CD4-positive, alpha-beta memory T cell (primary cell): ENCODE measurements at regions of chr20 and their contacts with region 1.

Region 1: DNA sequence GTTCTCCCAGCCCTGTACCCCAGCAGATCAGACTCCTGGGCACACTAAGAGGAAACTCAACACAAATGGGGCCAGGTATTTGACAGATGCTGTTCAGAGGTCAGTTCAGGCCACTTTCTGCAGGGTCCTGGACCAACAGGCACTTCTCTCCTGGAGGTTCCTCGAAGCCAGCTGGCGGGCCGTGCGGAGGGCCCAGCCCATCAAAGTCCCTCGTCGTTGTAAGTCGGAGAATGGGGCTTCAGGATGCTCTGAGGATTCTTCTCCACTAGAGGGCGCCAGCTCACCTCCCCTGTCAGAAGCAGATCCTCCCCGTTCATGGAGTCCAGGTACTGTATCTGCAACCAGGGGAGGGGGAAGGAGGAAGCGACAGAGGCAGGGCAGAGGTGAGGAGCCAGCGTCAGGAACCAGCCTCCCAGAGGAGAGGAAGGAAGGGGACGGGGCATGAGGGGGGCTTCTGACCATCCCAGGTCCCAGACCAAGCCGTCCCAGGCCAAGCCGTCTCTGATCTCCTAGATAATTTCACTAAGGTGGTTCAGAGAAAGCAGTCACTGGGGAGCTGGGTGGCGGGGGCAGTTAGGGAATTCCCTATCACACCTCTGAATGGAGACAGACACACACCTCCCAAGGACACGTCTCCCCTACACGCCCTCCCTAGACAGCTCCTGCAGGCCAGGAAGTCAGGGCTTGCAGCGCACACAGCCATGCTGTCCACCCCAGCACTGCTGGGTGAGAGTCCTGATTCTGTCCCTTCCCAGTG is 11.7 kb upstream of the FAM83C start:
- DNase-seq: peak; percentile 80 to 84 (median 82)
- H3K4me3 ChIP-seq: no peak overlapping the region
- H3K4me3 Mint-ChIP-seq: no peak overlapping the region
- H3K27ac ChIP-seq: no peak overlapping the region
- H3K27ac Mint-ChIP-seq: peak overlapping the region in 5 of 7 donors; percentile 18 to 76 (median 61)
- H3K4me1 ChIP-seq: peaks cover 6% of the 10 kb centered on the region
- H3K4me1 Mint-ChIP-seq: peaks cover 3 to 10% (median 5%) of the 10 kb centered on the region in 4 donors
- H3K27me3 ChIP-seq: no peaks in the 10 kb centered on the region
- H3K27me3 Mint-ChIP-seq: no peaks in the 10 kb centered on the region

Region 2: DNA sequence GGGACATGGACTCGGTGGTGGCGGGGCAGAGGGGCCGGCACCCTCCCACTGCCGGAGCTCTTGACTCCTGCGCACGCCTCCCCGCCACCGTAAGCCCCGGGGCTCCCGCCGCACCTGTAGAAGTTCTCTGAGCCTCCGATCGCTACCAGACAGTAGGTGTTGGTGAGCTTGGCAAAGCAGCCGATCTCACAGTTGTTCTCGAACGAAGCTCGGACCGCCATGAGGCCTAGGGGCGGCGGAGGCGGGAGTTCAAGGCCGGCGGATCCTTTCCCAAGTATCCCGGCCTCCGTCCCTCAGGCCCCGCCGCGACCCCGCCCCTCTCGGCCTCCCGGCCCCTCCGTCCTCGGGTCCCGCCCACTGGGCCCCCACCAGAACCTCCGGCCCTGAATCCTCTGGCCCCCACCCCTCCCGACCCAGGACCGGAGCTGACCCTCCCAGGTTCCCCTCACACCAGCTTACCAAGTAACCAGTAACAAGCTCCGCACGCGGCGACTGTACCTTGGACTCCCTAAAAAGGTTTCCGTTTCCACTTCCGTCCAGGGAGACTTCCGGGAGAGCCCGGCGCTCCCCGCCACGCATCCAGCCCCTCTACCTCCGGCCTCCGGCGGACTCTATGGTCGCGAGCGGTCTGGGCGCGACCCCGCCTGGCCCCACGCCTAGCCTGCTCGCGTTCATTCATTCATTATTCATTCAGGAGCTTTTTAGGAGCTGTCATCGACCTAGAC is 19.5 kb before region 1 on chr20 and contains the start of gene EIF6:
- CTCF ChIA-PET with region 1: interaction called, 14 read pairs
- POLR2A ChIA-PET with region 1: interaction called, 4 read pairs
- intact Hi-C with region 1: loop called (anchors 2 kb)
- DNase-seq: peak; percentile 50 to 66 (median 55)
- H3K4me3 ChIP-seq: peak within 1 kb of the TSS; percentile 71 to 80
- H3K4me3 Mint-ChIP-seq: peak within 1 kb of the TSS; percentile 87 to 94 (median 90)
- H3K27ac ChIP-seq: peak within 1 kb of the TSS; percentile 72
- H3K27ac Mint-ChIP-seq: peak within 1 kb of the TSS; percentile 70 to 97 (median 90)
- H3K4me1 ChIP-seq: peaks cover 18% of the 10 kb centered on the region
- H3K4me1 Mint-ChIP-seq: peaks cover 19 to 42% (median 30%) of the 10 kb centered on the region in 4 donors
- H3K27me3 ChIP-seq: no peaks in the 10 kb centered on the region
- H3K27me3 Mint-ChIP-seq: no peaks in the 10 kb centered on the region
- total RNA-seq, gene EIF6: 44.0 to 52.3 TPM

Region 3: GRCh38 chr20:35292376-35293285 is 11.3 kb before region 1 on chr20 and contains the start of gene FAM83C:
- CTCF ChIA-PET with region 1: interaction called, 27 read pairs
- POLR2A ChIA-PET with region 1: no interaction called
- intact Hi-C with region 1: no loop called
- DNase-seq: no peak
- H3K4me3 ChIP-seq: no peak within 1 kb of the TSS
- H3K4me3 Mint-ChIP-seq: no peak within 1 kb of the TSS
- H3K27ac ChIP-seq: no peak within 1 kb of the TSS
- H3K27ac Mint-ChIP-seq: no peak within 1 kb of the TSS
- H3K4me1 ChIP-seq: no peaks in the 10 kb centered on the region
- H3K4me1 Mint-ChIP-seq: no peaks in the 10 kb centered on the region
- H3K27me3 ChIP-seq: no peaks in the 10 kb centered on the region
- H3K27me3 Mint-ChIP-seq: peaks cover 3 to 8% of the 10 kb centered on the region in 2 donors
- total RNA-seq, gene FAM83C: not detected

Region 4: DNA sequence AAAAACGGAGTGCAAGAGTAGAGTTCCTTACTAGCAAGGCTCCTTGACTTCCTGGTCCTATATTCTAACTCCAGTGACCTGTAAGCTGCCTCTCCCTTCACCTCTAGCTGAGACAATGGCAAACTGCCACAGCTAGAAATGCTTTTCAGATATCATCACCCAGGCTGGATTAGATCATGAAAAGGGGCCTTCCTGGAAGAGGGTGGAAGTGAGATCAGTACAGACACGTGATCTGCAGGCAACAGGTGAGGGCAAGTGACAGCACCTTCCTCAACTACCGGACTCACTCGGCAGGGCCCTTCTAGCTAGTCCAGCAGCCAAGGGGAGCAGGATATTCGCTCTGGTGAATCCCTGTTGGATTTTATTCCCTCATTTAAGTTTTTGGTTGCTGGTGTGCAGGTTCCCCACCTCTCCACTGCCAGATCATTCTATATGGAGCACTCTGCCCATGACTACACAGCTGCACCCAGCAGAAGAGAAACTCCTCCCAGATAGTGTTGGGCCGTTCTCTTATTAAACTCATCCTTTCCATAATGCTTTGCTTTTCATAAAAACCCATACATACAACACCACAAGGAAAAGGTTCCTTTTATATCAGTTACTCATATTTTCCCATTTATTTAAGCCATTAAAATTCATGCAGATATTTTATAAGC is 14.7 kb after region 1 on chr20:
- CTCF ChIA-PET with region 1: interaction called, 12 read pairs
- POLR2A ChIA-PET with region 1: no interaction called
- intact Hi-C with region 1: no loop called
- DNase-seq: no peak
- H3K4me3 ChIP-seq: no peak overlapping the region
- H3K4me3 Mint-ChIP-seq: no peak overlapping the region
- H3K27ac ChIP-seq: no peak overlapping the region
- H3K27ac Mint-ChIP-seq: peak overlapping the region in 2 of 7 donors; percentile 57 to 65
- H3K4me1 ChIP-seq: peaks cover 3% of the 10 kb centered on the region
- H3K4me1 Mint-ChIP-seq: peaks cover 6 to 22% (median 10%) of the 10 kb centered on the region in 4 donors
- H3K27me3 ChIP-seq: no peaks in the 10 kb centered on the region
- H3K27me3 Mint-ChIP-seq: no peaks in the 10 kb centered on the region

Region 5: GRCh38 chr20:35329435-35330139 is 25.7 kb after region 1 on chr20:
- CTCF ChIA-PET with region 1: interaction called, 19 read pairs
- POLR2A ChIA-PET with region 1: no interaction called
- intact Hi-C with region 1: no loop called
- DNase-seq: peak in 1 of 5 donors; percentile 11
- H3K4me3 ChIP-seq: no peak overlapping the region
- H3K4me3 Mint-ChIP-seq: no peak overlapping the region
- H3K27ac ChIP-seq: no peak overlapping the region
- H3K27ac Mint-ChIP-seq: no peak overlapping the region
- H3K4me1 ChIP-seq: no peaks in the 10 kb centered on the region
- H3K4me1 Mint-ChIP-seq: no peaks in the 10 kb centered on the region
- H3K27me3 ChIP-seq: no peaks in the 10 kb centered on the region
- H3K27me3 Mint-ChIP-seq: no peaks in the 10 kb centered on the region

Region 6: DNA sequence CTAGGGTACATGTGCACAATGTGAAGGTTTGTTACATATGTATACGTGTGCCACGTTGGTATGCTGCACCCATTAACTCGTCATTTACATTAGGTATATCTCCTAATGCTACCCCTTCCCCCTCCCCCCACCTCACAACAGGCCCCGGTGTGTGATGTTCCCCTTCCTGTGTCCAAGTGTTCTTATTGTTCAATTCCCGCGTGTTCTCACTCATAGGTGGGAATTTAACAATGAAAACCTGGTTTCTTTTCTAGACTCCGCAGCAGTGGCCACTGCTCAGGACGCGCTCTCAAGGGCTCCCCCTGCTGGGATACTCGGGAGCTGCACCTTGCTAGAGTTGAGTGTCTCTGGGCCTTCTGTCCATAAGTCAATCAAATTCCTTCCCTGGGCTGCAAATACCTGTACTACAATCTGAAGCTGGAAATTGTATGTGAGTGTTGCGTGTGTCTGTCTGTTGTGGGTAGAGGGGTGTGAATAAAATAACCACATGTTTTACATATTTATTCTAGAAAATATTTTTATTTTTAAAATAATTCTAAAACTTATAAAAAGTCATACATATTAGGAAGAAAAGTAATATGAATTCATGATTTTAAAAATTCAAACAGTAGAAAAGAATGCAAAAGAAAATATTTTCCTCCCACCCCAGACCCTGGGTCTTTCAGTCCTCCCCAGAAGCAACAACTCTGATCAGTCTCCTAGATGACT is 143.3 kb after region 1 on chr20:
- CTCF ChIA-PET with region 1: interaction called, 68 read pairs
- POLR2A ChIA-PET with region 1: no interaction called
- intact Hi-C with region 1: loop called (anchors 1 kb)
- DNase-seq: peak; percentile 80 to 84 (median 83)
- H3K4me3 ChIP-seq: peak overlapping the region in 1 of 2 donors; percentile 44
- H3K4me3 Mint-ChIP-seq: peak overlapping the region; percentile 80 to 94 (median 87)
- H3K27ac ChIP-seq: no peak overlapping the region
- H3K27ac Mint-ChIP-seq: peak overlapping the region in 4 of 7 donors; percentile 54 to 82 (median 76)
- H3K4me1 ChIP-seq: no peaks in the 10 kb centered on the region
- H3K4me1 Mint-ChIP-seq: peaks cover 0 to 3% (median 3%) of the 10 kb centered on the region in 4 donors
- H3K27me3 ChIP-seq: no peaks in the 10 kb centered on the region
- H3K27me3 Mint-ChIP-seq: peaks cover 3% of the 10 kb centered on the region in 2 donors